Endothelial cell of umbilical vein (primary cell): ENCODE measurements at regions of chr16 and their contacts with region 1.

Region 1: GRCh38 chr16:85821441-85822135 is 22.1 kb downstream of the COX4I1 start:
- DNase-seq: peak; percentile 67
- H3K4me3 ChIP-seq: no peak overlapping the region
- H3K27ac ChIP-seq: no peak overlapping the region
- H3K4me1 ChIP-seq: no peaks in the 10 kb centered on the region
- H3K27me3 ChIP-seq: peaks cover 0 to 2% of the 10 kb centered on the region in 2 experiments
- CTCF ChIP-seq: peak; percentile 90 to 95
- POLR2A ChIP-seq: no peak

Region 2: DNA sequence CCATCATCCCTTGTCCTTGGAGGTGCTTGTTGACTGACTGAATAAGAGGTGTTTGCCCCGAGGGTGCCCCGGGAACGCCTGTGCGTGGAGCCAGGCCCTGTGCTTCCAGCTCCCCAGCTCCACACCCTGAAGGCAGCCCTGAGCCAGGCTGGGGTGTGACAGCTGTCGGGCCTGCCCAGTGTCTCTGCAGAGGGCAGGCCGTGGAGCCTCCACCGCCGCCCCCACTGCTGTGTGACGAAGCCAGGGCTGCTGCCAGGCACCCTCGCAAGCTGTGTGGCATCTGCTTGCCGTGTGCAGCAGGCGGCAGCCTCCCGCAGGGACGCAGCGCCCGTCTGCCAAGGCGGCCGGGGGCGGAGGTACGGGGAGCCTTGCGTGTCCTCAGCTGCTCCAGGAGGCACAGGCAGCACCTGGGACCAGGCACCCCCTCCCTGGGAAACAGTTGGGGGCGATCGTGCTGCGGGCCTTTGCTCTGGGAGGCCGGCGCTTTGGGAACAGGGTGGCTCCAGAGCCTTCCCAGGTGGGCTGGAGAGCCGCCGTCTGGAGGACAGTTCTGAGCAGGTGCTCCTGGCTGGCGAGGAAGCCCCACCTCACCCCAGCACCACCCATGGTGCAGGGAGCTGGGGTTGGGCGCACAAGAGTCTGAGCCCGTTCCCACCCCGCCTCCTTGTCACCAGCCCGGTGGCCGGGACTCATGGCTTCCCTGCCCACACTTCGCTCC is 181.9 kb before region 1 on chr16:
- CTCF ChIA-PET with region 1: no interaction called
- POLR2A ChIA-PET with region 1: no interaction called
- dilution Hi-C with region 1: no loop called
- intact Hi-C with region 1: no loop called
- DNase-seq: no peak
- H3K4me3 ChIP-seq: no peak overlapping the region
- H3K27ac ChIP-seq: no peak overlapping the region
- H3K4me1 ChIP-seq: peaks cover 5% of the 10 kb centered on the region
- H3K27me3 ChIP-seq: no peaks in the 10 kb centered on the region
- CTCF ChIP-seq: no peak
- POLR2A ChIP-seq: no peak

Region 3: DNA sequence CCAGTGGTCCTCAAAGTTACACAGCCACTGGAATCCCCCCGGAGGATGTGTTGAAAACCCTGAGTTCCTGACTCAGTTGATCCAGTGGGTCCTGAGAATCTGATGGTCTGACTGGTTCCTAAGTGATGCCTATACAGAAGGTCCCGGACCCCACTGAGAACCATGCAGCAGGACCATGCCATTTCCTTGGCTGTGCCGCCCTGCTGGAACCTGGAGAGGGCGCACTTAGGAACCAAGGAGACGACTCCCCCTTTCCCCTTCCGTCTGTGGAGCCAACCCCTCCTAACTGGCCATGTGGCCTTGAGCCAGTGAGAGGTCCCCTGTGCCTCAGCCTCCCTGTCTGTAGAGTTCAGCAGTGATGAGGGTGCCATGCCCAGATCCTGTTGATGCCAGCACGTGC is 92.7 kb before region 1 on chr16:
- CTCF ChIA-PET with region 1: no interaction called
- POLR2A ChIA-PET with region 1: no interaction called
- dilution Hi-C with region 1: no loop called
- intact Hi-C with region 1: no loop called
- DNase-seq: no peak
- H3K4me3 ChIP-seq: no peak overlapping the region
- H3K27ac ChIP-seq: no peak overlapping the region
- H3K4me1 ChIP-seq: no peaks in the 10 kb centered on the region
- H3K27me3 ChIP-seq: no peaks in the 10 kb centered on the region
- CTCF ChIP-seq: peak; percentile 12 to 25
- POLR2A ChIP-seq: no peak

Region 4: DNA sequence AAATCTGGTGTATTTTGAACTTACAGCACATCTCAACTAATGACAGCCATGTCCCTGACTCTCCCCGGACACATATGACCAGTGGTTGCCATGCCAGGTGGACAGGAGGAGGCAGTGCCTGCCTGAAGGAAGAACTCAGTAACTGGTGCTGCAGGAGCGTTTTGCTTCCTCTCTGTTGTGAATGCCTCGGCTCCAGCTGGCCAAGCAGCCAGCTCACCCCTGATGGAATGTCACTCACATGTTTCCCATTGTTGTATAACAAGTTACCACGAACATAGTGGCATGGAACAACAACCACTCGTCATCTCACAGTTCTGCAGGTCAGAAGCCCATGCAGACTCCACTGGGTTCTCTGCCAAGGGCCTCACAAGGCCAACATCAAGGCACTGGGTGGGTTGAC is 57.3 kb after region 1 on chr16:
- CTCF ChIA-PET with region 1: interaction called, 17 read pairs
- POLR2A ChIA-PET with region 1: no interaction called
- dilution Hi-C with region 1: no loop called
- intact Hi-C with region 1: loop called (anchors 2 kb)
- DNase-seq: peak; percentile 92
- H3K4me3 ChIP-seq: no peak overlapping the region
- H3K27ac ChIP-seq: no peak overlapping the region
- H3K4me1 ChIP-seq: peaks cover 3% of the 10 kb centered on the region
- H3K27me3 ChIP-seq: peaks cover 3 to 13% of the 10 kb centered on the region in 2 experiments
- CTCF ChIP-seq: peak; percentile 5 to 25
- POLR2A ChIP-seq: no peak

Region 5: GRCh38 chr16:85986931-85987749 is 165.6 kb after region 1 on chr16:
- CTCF ChIA-PET with region 1: interaction called, 564 read pairs
- POLR2A ChIA-PET with region 1: no interaction called
- dilution Hi-C with region 1: no loop called
- intact Hi-C with region 1: loop called (anchors 1 kb)
- DNase-seq: no peak
- H3K4me3 ChIP-seq: no peak overlapping the region
- H3K27ac ChIP-seq: no peak overlapping the region
- H3K4me1 ChIP-seq: no peaks in the 10 kb centered on the region
- H3K27me3 ChIP-seq: peaks cover 0 to 5% of the 10 kb centered on the region in 2 experiments
- CTCF ChIP-seq: peak in 1 of 2 donors; percentile 50
- POLR2A ChIP-seq: no peak

Region 6: DNA sequence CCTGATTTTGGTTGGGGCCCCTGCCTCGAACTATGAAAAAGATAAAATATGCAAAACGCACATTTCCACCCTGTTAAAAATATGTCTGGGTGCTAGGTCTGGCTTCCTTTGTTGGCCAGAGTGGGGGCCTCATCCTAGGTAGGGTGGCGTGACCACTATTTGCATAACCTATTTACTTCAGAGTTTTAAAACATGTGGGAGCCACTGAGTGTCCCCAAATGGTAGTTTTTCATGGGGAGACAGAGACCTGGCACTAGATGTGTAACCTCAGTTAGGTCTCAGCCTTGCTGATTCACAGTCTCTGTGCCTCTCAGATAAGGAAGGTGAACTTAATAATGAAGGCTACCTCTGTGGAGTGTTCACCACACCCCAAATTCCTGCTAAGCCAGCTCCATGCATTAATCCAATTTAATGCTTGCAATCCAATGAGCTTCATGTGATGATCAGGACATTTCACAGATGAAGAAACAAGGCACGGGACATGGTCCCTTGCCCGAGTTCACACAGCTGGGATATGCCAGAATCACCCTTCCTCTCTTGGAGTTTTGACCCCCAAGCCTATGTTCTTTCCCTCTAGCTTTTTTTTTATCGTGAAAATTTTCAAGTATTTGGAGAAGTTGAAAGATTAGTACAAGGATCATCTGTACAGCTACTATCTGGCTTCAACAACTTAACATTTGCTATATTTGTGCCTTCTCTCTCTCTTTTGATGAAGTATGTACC is 180.8 kb after region 1 on chr16:
- CTCF ChIA-PET with region 1: interaction called, 333 read pairs
- POLR2A ChIA-PET with region 1: no interaction called
- dilution Hi-C with region 1: no loop called
- intact Hi-C with region 1: no loop called
- DNase-seq: no peak
- H3K4me3 ChIP-seq: no peak overlapping the region
- H3K27ac ChIP-seq: no peak overlapping the region
- H3K4me1 ChIP-seq: no peaks in the 10 kb centered on the region
- H3K27me3 ChIP-seq: peaks cover 1 to 8% of the 10 kb centered on the region in 2 experiments
- CTCF ChIP-seq: no peak
- POLR2A ChIP-seq: no peak

Region 7: DNA sequence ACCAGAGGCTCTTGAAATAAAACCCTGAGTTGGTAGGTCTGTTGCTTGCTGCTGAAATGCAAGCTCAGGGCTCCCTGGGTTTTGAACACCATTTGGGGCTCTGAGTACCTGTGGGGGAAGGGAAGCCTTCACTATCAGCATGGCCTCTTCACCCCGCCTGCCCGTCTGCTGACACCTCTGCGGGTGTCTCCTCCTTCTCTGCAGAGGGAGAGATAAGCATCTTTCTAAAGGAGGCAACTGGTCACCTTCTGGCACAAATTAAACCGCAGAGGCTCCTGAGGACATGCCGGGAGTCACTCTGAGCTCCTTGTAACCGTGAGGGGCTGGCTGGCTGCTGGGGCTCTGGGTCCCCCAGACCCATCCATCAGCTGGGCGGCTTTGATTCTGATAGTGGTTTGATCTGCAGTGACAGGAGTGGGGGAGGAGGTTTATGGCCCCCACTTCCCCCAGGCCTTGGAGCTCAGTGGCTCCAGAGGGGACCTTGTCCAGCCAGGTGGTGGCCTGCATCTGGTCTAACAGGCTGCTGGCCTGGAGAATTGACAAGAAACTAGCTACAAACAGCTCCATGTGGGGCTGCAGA is 200.9 kb after region 1 on chr16:
- CTCF ChIA-PET with region 1: interaction called, 333 read pairs
- POLR2A ChIA-PET with region 1: no interaction called
- dilution Hi-C with region 1: no loop called
- intact Hi-C with region 1: no loop called
- DNase-seq: no peak
- H3K4me3 ChIP-seq: no peak overlapping the region
- H3K27ac ChIP-seq: no peak overlapping the region
- H3K4me1 ChIP-seq: no peaks in the 10 kb centered on the region
- H3K27me3 ChIP-seq: no peaks in the 10 kb centered on the region
- CTCF ChIP-seq: no peak
- POLR2A ChIP-seq: no peak